MCF 10A (cell line): ENCODE measurements at regions of chr1 and their contacts with region 1.

Region 1: GRCh38 chr1:207751790-207752455 is at the start of gene CD46:
- DNase-seq: peak; percentile 100
- H3K4me3 Mint-ChIP-seq: peak within 1 kb of the TSS; percentile 99
- H3K27ac Mint-ChIP-seq: peak within 1 kb of the TSS; percentile 96
- H3K4me1 Mint-ChIP-seq: peaks cover 63% of the 10 kb centered on the region
- H3K27me3 Mint-ChIP-seq: no peaks in the 10 kb centered on the region
- CTCF ChIP-seq: no peak
- total RNA-seq, gene CD46: 181 and 184 TPM in 2 replicates

Region 2: GRCh38 chr1:207032528-207033017 is 719.4 kb before region 1 on chr1 and contains the start of gene C1orf116:
- CTCF ChIA-PET with region 1: no interaction called
- POLR2A ChIA-PET with region 1: interaction called, 13 read pairs
- intact Hi-C with region 1: no loop called
- DNase-seq: peak; percentile 98
- H3K4me3 Mint-ChIP-seq: peak within 1 kb of the TSS; percentile 75
- H3K27ac Mint-ChIP-seq: peak within 1 kb of the TSS; percentile 86
- H3K4me1 Mint-ChIP-seq: peaks cover 79% of the 10 kb centered on the region
- H3K27me3 Mint-ChIP-seq: no peaks in the 10 kb centered on the region
- CTCF ChIP-seq: no peak
- total RNA-seq, gene C1orf116: 35.4 and 35.5 TPM in 2 replicates

Region 3: DNA sequence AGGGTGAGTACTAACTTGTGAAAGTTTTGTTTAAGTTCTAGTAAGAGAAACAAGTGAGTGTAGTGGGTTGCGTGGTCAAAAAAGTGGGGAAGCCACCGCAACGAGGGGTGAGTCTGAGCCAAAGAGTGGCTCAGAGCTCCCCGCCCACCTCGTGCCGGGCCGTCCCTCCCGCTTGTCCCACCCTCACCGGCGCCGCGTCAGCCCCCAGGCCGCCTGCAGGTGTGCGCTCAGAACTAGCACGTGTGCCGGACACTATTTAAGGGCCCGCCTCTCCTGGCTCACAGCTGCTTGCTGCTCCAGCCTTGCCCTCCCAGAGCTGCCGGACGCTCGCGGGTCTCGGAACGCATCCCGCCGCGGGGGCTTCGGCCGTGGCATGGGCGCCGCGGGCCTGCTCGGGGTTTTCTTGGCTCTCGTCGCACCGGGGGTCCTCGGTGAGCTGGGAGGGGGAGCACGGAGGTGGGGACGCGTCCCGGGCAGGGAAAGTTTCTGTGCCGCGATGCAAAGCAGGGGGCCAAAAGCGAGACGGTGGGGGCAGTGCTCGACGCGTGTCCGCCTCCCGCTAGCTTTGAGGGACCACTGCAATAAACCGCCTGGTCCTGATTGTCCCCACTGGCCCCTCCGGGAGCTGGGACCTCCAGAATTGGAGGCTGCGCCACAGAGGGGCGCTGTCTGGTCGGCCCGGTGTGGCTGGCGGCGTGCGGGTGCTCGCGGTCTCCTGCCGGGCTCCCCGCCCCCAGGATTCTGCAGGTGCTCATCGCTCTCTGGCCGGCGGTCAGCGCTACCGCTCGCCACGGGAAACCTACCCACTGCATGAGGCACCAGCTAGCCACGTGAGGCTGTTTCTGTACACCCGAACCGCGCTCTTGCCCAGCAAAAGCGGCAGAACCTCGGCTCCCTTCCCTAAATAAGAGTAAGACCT is 297.6 kb before region 1 on chr1 and contains the start of gene CR2:
- CTCF ChIA-PET with region 1: no interaction called
- POLR2A ChIA-PET with region 1: no interaction called
- intact Hi-C with region 1: no loop called
- DNase-seq: peak; percentile 72
- H3K4me3 Mint-ChIP-seq: peak within 1 kb of the TSS; percentile 39
- H3K27ac Mint-ChIP-seq: no peak within 1 kb of the TSS
- H3K4me1 Mint-ChIP-seq: no peaks in the 10 kb centered on the region
- H3K27me3 Mint-ChIP-seq: peaks cover 49% of the 10 kb centered on the region
- CTCF ChIP-seq: no peak
- total RNA-seq, gene CR2: not detected in 2 replicates

Region 4: DNA sequence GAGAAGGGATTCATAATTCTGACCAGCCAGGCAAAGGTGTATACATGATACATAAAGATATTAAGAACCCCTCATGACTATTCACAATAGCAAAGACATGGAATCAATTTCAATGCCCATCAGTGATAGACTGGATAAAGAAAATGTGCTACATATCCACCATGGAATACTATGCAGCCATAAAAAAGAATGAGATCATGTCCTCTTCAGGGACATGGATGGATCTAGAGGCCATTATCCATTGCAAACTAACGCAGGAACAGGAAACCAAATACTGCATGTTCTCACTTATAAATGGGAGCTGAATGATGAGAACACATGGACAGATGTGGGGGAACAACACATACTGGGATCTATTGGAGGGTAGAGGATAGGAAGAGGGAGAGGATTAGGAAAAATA is 85.6 kb before region 1 on chr1:
- CTCF ChIA-PET with region 1: no interaction called
- POLR2A ChIA-PET with region 1: no interaction called
- intact Hi-C with region 1: no loop called
- DNase-seq: no peak
- H3K4me3 Mint-ChIP-seq: no peak overlapping the region
- H3K27ac Mint-ChIP-seq: no peak overlapping the region
- H3K4me1 Mint-ChIP-seq: peaks cover 5% of the 10 kb centered on the region
- H3K27me3 Mint-ChIP-seq: peaks cover 74% of the 10 kb centered on the region
- CTCF ChIP-seq: no peak

Region 5: GRCh38 chr1:207711285-207711684 is 40.6 kb before region 1 on chr1:
- CTCF ChIA-PET with region 1: interaction called, 11 read pairs
- POLR2A ChIA-PET with region 1: interaction called, 65 read pairs
- intact Hi-C with region 1: loop called (anchors 2 kb)
- DNase-seq: peak; percentile 74
- H3K4me3 Mint-ChIP-seq: no peak overlapping the region
- H3K27ac Mint-ChIP-seq: no peak overlapping the region
- H3K4me1 Mint-ChIP-seq: peaks cover 25% of the 10 kb centered on the region
- H3K27me3 Mint-ChIP-seq: no peaks in the 10 kb centered on the region
- CTCF ChIP-seq: peak; percentile 19

Region 6: GRCh38 chr1:207762622-207763021 is 10.7 kb after region 1 on chr1:
- CTCF ChIA-PET with region 1: interaction called, 3 read pairs
- POLR2A ChIA-PET with region 1: interaction called, 26 read pairs
- intact Hi-C with region 1: no loop called
- DNase-seq: no peak
- H3K4me3 Mint-ChIP-seq: no peak overlapping the region
- H3K27ac Mint-ChIP-seq: peak overlapping the region; percentile 18
- H3K4me1 Mint-ChIP-seq: no peaks in the 10 kb centered on the region
- H3K27me3 Mint-ChIP-seq: no peaks in the 10 kb centered on the region
- CTCF ChIP-seq: no peak

Region 7: DNA sequence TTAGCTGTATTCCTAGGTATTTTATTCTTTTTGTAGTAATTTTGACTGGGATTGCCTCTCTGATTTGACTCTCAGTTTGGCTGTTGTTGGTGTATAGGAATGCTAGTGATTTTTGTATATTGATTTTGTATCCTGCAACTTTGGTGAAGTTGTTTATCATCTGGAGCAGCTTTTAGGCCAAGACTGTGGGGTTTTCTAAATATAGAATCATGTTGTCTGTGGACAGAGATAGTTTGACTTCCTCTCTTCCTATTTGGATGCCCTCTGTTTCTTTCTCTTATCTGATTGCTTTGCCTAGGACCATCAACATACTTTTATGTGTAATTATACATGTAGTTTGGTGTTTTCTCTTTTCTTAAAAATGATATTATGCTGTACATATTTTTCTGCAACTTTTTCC is 27.1 kb after region 1 on chr1:
- CTCF ChIA-PET with region 1: no interaction called
- POLR2A ChIA-PET with region 1: interaction called, 19 read pairs
- intact Hi-C with region 1: no loop called
- DNase-seq: no peak
- H3K4me3 Mint-ChIP-seq: no peak overlapping the region
- H3K27ac Mint-ChIP-seq: no peak overlapping the region
- H3K4me1 Mint-ChIP-seq: peaks cover 4% of the 10 kb centered on the region
- H3K27me3 Mint-ChIP-seq: no peaks in the 10 kb centered on the region
- CTCF ChIP-seq: no peak

Region 8: DNA sequence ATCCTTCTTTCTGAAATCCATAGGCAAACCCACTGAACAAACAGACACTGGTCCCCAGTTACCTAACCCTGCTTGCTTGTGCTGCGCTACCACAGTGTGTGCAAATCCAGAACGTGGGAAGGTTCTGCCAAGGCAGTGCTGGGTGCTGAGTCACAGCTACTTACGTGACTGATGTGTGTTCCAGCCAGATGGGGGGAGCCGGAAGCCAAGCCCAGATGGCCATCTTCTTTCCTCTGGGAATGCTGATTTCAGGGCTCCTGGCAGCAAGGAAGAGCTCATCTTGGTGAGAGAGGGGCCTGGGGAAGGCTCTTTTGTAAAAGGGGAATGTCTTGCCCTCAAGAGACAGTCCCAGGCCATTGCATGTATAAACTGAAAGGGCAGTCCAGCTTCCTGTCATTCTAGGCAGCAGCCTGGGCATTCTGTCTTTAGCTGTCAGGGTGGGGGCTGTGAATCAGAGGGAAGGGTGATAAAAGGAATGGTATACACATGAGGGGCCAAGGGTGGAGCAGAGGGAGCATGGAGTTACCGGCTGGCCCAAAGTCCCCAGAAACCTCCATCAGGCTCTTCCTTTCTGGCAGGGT is 54.0 kb after region 1 on chr1:
- CTCF ChIA-PET with region 1: interaction called, 7 read pairs
- POLR2A ChIA-PET with region 1: interaction called, 84 read pairs
- intact Hi-C with region 1: no loop called
- DNase-seq: peak; percentile 100
- H3K4me3 Mint-ChIP-seq: peak overlapping the region; percentile 21
- H3K27ac Mint-ChIP-seq: peak overlapping the region; percentile 95
- H3K4me1 Mint-ChIP-seq: peaks cover 58% of the 10 kb centered on the region
- H3K27me3 Mint-ChIP-seq: no peaks in the 10 kb centered on the region
- CTCF ChIP-seq: no peak